ENCODE measurements at regions of chr4 and their contacts with region 1.

Region 1: GRCh38 chr4:41360214-41360920 is 103.6 kb downstream of the UCHL1 start:
- DNase-seq: peak; percentile 81 to 85
- ATAC-seq: peak; percentile 73 to 92 (median 84)
- H3K4me3 ChIP-seq: peak overlapping the region; percentile 72 to 97 (median 85)
- H3K27ac ChIP-seq: peak overlapping the region; percentile 84 to 95 (median 92)
- H3K4me1 ChIP-seq: peaks cover 9 to 47% (median 36%) of the 10 kb centered on the region in 9 donors
- H3K27me3 ChIP-seq: peaks cover 0 to 39% (median 0%) of the 10 kb centered on the region in 7 donors
- CTCF ChIP-seq: no peak

Region 2: DNA sequence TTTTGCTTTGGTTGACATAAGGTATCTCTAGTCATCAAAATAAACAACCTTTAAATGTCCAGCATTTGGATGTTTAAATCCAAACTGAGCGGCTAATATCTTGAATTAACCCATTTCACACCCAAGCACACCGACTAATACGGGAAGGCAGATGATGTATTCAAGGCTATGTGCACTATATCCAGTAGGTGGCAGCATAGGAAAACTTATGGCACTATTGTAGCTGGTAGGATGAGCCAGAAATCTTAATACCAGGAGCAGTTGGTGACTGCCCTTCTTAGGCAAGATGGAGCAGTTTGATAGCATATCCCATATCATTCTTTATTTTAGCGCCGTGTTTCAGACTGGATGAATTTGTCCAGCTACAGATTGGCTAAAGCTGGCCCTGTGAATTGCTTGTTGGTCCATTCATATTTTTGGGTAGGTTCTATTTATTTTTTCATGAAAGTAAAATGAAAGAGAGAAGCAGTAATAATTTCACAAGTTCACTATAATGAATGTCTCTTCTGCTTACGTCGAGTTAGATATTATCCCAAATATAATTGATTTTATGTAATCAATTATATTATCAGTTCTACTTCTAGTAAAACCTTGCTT is 79.2 kb before region 1 on chr4:
- intact Hi-C with region 1: loop called in 2 of 10 experiments (anchors 5 kb)
- DNase-seq: peak in 1 of 2 donors; percentile 62
- ATAC-seq: peak; percentile 92 to 96 (median 94)
- H3K4me3 ChIP-seq: no peak overlapping the region
- H3K27ac ChIP-seq: no peak overlapping the region
- H3K4me1 ChIP-seq: peaks cover 0 to 5% (median 0%) of the 10 kb centered on the region in 9 donors
- H3K27me3 ChIP-seq: peaks cover 0 to 6% (median 0%) of the 10 kb centered on the region in 7 donors
- CTCF ChIP-seq: peak; percentile 72 to 93 (median 86)

Region 3: GRCh38 chr4:41307638-41308037 is 52.7 kb before region 1 on chr4:
- intact Hi-C with region 1: loop called in 1 of 10 experiments (anchors 5 kb)
- DNase-seq: peak in 1 of 2 donors; percentile 31
- ATAC-seq: peak; percentile 69 to 91 (median 78)
- H3K4me3 ChIP-seq: no peak overlapping the region
- H3K27ac ChIP-seq: peak overlapping the region in 7 of 10 donors; percentile 42 to 68 (median 45)
- H3K4me1 ChIP-seq: peaks cover 0 to 28% (median 11%) of the 10 kb centered on the region in 9 donors
- H3K27me3 ChIP-seq: no peaks in the 10 kb centered on the region
- CTCF ChIP-seq: no peak

Region 4: DNA sequence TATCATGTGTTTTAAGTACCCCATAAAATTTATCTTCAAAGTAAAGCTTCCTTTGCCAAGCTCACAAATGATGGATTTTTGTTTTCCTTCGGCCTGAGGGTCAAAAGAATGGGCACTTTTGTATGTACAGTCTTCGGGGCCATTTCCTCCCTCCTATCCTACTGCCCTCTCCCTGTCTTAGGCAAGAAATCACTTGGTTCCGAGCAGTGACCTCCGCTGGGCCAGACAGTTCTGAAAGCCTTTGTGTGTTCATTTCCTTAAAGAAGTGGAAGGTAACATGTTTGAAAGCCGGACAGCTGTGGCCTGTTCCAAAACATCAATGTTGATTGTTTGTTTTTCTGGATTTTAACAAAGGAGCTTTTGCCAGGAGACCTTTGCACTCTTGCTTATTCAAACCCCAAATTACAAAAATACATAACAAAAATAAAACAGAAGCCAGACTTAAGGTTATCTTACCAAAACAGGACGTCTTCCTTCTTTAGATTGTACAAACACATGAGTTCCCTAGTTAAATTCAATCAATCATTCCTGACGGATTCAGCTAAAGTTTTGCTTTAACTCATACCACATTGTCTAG is 67.0 kb after region 1 on chr4:
- intact Hi-C with region 1: loop called in 4 of 10 experiments (anchors 5 to 10 kb)
- DNase-seq: no peak
- ATAC-seq: peak in 6 of 8 donors; percentile 46 to 72 (median 60)
- H3K4me3 ChIP-seq: no peak overlapping the region
- H3K27ac ChIP-seq: peak overlapping the region; percentile 15 to 89 (median 69)
- H3K4me1 ChIP-seq: peaks cover 4 to 92% (median 80%) of the 10 kb centered on the region in 9 donors
- H3K27me3 ChIP-seq: no peaks in the 10 kb centered on the region
- CTCF ChIP-seq: no peak

Region 5: DNA sequence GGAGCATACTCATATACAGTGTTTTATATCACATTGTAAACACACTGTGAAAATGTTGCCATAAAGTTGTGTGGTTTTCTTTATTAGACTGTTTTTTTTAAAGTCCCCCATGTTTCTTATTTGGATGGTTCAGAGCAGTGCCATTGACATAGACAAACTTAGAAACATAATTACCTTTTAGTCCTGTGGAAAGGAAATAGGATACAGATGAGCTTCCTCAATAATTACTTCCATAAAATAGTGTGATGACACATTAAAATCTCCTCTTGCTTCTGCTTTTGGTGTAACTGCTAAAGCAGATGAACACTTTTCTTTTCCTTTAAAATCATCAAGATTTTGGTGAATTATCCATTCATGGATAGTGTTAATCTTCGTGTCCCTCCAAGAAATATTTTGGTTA is 124.7 kb after region 1 on chr4:
- intact Hi-C with region 1: no loop called
- DNase-seq: no peak
- ATAC-seq: no peak
- H3K4me3 ChIP-seq: no peak overlapping the region
- H3K27ac ChIP-seq: no peak overlapping the region
- H3K4me1 ChIP-seq: peaks cover 0 to 56% (median 30%) of the 10 kb centered on the region in 9 donors
- H3K27me3 ChIP-seq: no peaks in the 10 kb centered on the region
- CTCF ChIP-seq: no peak

Region 6: DNA sequence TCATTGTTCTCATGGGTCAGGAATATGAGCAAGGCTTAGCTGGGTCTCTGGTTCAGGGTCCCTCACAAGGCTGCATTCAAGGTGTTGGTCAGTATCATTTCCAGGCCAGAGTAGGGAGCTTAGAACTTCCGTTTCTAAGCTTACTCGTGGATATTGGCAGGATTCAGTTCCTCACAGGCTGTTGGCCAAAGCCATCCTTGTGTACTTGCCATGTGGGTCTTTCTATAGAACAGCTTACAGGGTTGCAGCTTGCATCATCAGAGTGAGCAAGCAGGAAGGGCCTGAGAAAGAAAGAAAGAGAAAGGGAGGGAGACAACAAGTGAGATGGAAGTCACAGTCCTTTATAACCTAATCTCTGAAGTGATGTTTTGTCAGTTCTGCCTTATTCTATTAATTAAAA is 172.5 kb after region 1 on chr4:
- intact Hi-C with region 1: loop called in 7 of 10 experiments (anchors 2 to 10 kb)
- DNase-seq: no peak
- ATAC-seq: peak in 1 of 8 donors; percentile 55
- H3K4me3 ChIP-seq: no peak overlapping the region
- H3K27ac ChIP-seq: peak overlapping the region in 3 of 10 donors; percentile 20 to 27 (median 20)
- H3K4me1 ChIP-seq: peaks cover 0 to 92% (median 71%) of the 10 kb centered on the region in 9 donors
- H3K27me3 ChIP-seq: no peaks in the 10 kb centered on the region
- CTCF ChIP-seq: no peak

Region 7: DNA sequence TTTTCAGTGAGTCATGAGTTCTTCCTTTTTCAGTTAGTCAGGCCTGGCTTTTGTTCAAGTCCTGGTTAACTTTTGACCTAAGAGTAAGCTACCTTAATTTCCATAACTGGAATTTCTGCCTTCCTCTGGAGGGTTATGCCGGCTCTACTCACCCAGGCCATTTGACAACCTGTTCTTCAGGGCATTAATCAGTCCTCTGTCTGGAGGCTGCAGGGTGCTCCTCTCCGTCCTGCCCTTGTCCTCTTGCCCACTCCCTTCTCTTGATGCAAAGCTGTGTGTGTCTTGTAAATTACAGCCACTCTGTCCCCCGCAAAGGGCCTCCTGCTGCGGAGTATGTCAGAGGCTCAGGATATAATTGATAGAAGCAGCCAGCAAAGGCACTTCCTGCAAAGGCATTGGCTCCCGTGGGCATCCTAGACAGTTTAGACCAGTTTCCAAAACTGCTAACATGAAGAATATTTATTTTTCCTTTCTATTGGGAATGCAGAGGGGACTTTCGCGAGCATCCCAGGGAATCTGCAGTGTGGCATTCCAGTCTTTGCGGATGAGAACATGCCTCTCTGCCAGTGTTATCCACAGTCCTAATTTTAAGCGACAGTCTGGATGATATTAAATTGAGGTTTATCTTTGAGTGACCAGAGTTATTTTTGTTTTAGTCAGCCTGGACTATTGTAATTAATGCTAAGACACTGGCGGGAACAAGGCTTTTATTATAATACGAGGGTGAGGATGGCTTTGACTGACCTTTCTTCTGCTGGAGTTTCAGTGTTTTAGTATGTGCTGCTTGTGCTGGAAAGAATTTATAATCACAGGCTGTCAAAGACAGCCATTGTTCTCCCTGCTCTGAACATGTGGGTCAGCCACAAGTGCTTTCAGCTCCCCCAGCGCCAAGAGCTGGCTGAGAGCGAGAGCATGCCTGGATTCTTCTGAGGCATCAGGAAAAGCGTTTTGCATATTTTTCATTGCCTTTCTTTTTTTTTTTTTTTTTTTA is 251.8 kb after region 1 on chr4:
- intact Hi-C with region 1: loop called in 1 of 10 experiments (anchors 10 kb)
- DNase-seq: peak; percentile 64 to 66
- ATAC-seq: peak; percentile 92 to 96 (median 93)
- H3K4me3 ChIP-seq: peak overlapping the region in 7 of 10 donors; percentile 0 to 39 (median 32)
- H3K27ac ChIP-seq: peak overlapping the region; percentile 19 to 82 (median 68)
- H3K4me1 ChIP-seq: peaks cover 6 to 44% (median 32%) of the 10 kb centered on the region in 9 donors
- H3K27me3 ChIP-seq: no peaks in the 10 kb centered on the region
- CTCF ChIP-seq: peak in 4 of 9 donors; percentile 6 to 37 (median 22)